GM10248 (cell line): ENCODE measurements at regions of chr15 and their contacts with region 1.

Region 1: GRCh38 chr15:44570361-44570760 is 33.4 kb downstream of the EIF3J start:
- DNase-seq: no peak
- CTCF ChIP-seq: no peak

Region 2: GRCh38 chr15:44545913-44546802 is 24.2 kb before region 1 on chr15:
- CTCF ChIA-PET with region 1: interaction called, 22 read pairs
- POLR2A ChIA-PET with region 1: interaction called, 3 read pairs
- DNase-seq: peak; percentile 45
- CTCF ChIP-seq: peak; percentile 46

Region 3: GRCh38 chr15:44598892-44599291 is 28.5 kb after region 1 on chr15:
- CTCF ChIA-PET with region 1: no interaction called
- POLR2A ChIA-PET with region 1: no interaction called
- DNase-seq: no peak
- CTCF ChIP-seq: no peak